HAP-1 (cell line): ENCODE measurements at regions of chr1 and their contacts with region 1.

Region 1: GRCh38 chr1:2443277-2444137 is 31.1 kb upstream of the PEX10 start:
- DNase-seq: no peak
- H3K4me3 ChIP-seq: no peak overlapping the region
- H3K4me1 ChIP-seq: no peaks in the 10 kb centered on the region
- H3K27me3 ChIP-seq: peaks cover 72% of the 10 kb centered on the region

Region 2: GRCh38 chr1:2115681-2116341 is 327.7 kb before region 1 on chr1:
- in situ Hi-C with region 1: no loop called
- DNase-seq: no peak
- H3K4me3 ChIP-seq: no peak overlapping the region
- H3K4me1 ChIP-seq: no peaks in the 10 kb centered on the region; the same call in 1 of the 2 replicates
- H3K27me3 ChIP-seq: no peaks in the 10 kb centered on the region

Region 3: GRCh38 chr1:2628191-2628932 is 184.9 kb after region 1 on chr1:
- in situ Hi-C with region 1: loop called (anchors 10 kb)
- DNase-seq: no peak
- H3K4me3 ChIP-seq: no peak overlapping the region
- H3K4me1 ChIP-seq: no peaks in the 10 kb centered on the region
- H3K27me3 ChIP-seq: peaks cover 46% of the 10 kb centered on the region

Region 4: DNA sequence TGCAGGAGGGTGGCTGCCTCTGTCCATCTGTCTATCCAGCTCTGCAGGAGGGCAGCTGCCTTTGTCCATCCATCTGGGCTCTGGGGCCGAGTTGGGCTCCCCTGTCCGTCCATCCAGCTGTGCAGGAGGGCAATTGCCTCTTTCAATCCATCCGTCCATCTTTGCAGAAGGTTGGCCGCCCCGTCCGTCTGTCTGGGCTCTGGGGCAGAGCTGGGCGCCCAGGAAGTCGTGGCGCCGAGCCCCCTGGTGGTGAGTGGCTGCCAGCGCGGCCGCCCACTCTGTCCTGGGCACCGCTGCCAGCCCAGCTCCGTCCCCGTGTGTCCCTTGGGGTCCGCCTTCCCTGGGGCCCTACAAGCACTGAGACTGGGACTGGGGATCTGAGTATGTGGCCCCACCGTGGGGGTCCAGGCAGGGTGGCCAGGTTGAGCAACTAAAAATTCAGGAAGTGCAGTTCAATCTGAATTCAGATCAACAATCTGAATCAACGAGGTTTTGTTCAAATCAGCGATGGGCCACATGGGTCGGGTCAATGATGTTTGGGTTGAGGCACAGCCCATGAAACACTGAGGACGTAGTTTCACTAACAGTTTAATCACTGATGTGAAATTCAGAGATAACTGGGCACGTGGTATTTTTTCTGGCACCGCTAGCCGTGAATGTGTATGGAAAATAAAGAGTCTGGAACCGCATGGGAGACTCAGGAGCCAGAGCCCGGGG is 478.6 kb after region 1 on chr1:
- in situ Hi-C with region 1: loop called (anchors 25 kb)
- DNase-seq: peak in 1 of 2 experiments; percentile 62
- H3K4me3 ChIP-seq: no peak overlapping the region
- H3K4me1 ChIP-seq: no peaks in the 10 kb centered on the region
- H3K27me3 ChIP-seq: peaks cover 48% of the 10 kb centered on the region

Region 5: DNA sequence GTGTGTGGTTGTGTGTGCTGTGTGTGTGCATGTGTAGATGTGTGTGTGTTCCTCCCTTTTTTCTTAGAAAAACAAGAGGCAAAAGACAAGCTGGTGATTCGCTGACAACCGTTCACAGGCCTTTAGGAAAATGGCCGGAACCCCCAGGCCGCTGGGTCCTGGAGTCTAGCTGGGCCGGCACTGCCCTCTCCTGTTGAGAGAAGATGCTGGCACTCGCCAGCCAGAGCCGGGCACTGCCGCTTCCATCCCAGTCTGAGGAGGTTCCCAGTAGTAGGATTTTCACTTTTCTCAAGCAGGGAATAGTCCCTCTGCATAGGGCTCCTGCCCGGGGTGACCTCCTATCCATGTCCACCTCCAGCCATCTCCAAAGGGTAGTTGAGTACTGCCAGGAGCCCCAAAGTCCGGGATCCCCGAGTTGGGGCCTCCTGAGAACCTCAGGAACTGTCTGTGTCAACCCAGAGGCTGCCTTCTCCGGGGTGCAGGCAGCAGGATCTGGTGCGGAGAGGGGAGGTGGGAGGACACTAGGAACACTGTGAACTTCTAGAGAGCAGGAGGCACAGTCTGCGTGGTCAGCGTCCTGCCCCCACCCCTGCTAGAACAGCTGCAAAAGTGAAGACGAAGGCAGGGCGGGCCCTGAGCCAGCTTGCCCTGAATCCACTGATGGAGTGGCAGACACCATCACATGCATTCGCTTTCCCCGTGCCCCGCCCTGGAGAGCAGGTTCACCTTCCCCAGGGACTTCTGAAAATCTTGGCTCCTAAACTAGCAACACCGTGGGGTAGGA is 966.8 kb after region 1 on chr1:
- in situ Hi-C with region 1: no loop called
- DNase-seq: peak in 1 of 2 experiments; percentile 59
- H3K4me3 ChIP-seq: no peak overlapping the region
- H3K4me1 ChIP-seq: no peaks in the 10 kb centered on the region
- H3K27me3 ChIP-seq: no peaks in the 10 kb centered on the region